ENCODE measurements at regions of chr2 and their contacts with region 1.

Region 1: GRCh38 chr2:200811336-200812121 is at the start of gene BZW1:
- DNase-seq: peak; percentile 93 to 98
- H3K4me3 ChIP-seq: peak within 1 kb of the TSS; percentile 84 to 100
- H3K27ac ChIP-seq: peak within 1 kb of the TSS; percentile 94 to 100
- H3K4me1 ChIP-seq: peaks cover 0 to 48% (median 34%) of the 10 kb centered on the region in 4 donors
- H3K27me3 ChIP-seq: no peaks in the 10 kb centered on the region
- CTCF ChIP-seq: no peak

Region 2: GRCh38 chr2:200713003-200713703 is 98.4 kb before region 1 on chr2:
- intact Hi-C with region 1: loop called (anchors 1 kb)
- DNase-seq: peak; percentile 81 to 94
- H3K4me3 ChIP-seq: peak overlapping the region; percentile 44 to 50
- H3K27ac ChIP-seq: peak overlapping the region; percentile 57 to 75
- H3K4me1 ChIP-seq: peaks cover 0 to 6% (median 0%) of the 10 kb centered on the region in 4 donors
- H3K27me3 ChIP-seq: no peaks in the 10 kb centered on the region
- CTCF ChIP-seq: peak; percentile 85 to 89

Region 3: GRCh38 chr2:200864176-200864976 is 52.8 kb after region 1 on chr2 and contains the start of gene CLK1:
- intact Hi-C with region 1: loop called (anchors 5 kb)
- DNase-seq: peak; percentile 96 to 98
- H3K4me3 ChIP-seq: peak within 1 kb of the TSS; percentile 90 to 95
- H3K27ac ChIP-seq: peak within 1 kb of the TSS; percentile 100
- H3K4me1 ChIP-seq: peaks cover 0 to 40% (median 17%) of the 10 kb centered on the region in 4 donors
- H3K27me3 ChIP-seq: no peaks in the 10 kb centered on the region
- CTCF ChIP-seq: no peak

Measured in tibial artery (tissue), 4 donors.